ENCODE measurements at regions of chr10 and their contacts with region 1.

Region 1: DNA sequence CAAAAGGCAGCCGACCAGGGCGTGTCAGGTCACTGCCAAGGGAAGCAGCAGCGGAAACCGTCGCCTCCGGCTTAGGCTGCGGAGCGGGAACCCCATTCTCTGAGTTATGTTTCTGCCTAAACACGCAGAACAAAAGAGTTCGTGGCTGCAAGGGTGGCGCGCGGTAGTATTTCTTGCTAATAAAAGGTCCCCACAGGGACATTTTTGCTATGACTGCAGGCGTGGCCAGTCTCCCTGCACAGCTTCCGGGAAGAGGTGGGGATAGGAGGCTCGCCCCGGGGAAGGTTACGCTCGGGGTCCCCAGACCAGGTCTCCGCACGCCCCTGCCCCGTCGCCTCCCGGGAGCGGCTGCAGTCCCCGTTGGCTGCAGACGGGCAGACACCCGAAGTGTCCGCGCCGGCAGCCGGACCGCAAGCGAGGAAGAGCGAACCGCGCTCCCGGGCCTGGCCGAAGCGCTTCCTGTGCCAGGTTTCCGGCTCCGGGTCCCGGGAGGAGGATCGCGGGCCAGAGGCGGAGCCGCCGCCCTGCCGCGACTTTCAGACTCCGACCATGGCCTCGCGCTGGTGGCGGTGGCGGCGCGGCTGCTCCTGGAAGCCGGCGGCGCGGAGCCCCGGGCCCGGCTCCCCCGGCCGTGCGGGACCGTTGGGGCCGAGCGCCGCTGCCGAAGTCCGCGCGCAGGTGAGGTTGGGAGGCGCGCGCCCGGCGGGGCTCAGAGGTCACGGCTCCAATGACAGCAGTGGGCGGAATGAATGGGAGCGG is at the start of gene PDSS1:
- DNase-seq: peak; percentile 69
- H3K4me3 Mint-ChIP-seq: peak within 1 kb of the TSS; percentile 98
- H3K27ac Mint-ChIP-seq: peak within 1 kb of the TSS; percentile 95
- H3K4me1 Mint-ChIP-seq: peaks cover 13% of the 10 kb centered on the region
- H3K27me3 Mint-ChIP-seq: no peaks in the 10 kb centered on the region
- CTCF ChIP-seq: no peak
- total RNA-seq, gene PDSS1: 9.1 and 14.3 TPM in 2 replicates

Region 2: DNA sequence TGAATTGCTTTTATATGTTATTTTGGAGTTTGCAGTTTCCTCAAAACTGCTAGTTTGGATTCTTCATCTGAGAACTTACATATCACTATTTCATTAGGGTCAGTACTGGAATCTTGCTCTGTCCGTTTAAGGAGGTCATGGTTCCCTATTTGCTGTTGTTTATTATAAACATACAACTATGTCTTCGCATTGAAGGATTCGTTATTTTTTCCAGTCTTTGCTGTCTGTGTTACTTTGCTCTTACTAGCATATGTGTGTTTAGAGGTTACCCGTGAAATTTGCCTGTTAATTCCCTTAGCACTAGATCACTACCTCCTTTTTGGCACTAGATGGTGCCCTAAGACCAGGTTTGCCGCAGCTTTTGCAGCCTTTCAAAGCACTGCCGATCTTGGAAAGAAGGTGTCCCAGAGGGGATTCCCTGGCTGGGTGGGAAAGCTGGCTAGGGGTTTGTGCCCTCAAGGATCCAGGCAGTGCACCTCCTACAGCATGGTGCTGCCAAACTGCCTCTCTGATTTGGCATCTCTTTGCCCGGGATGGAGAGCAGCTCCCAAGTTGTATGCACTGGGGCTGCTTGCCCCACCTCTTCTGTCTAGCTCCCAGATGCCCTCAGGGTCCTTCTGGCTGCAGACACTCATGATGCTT is 362.3 kb before region 1 on chr10:
- CTCF ChIA-PET with region 1: no interaction called
- POLR2A ChIA-PET with region 1: no interaction called
- intact Hi-C with region 1: loop called (anchors 10 kb)
- DNase-seq: peak; percentile 66
- H3K4me3 Mint-ChIP-seq: no peak overlapping the region
- H3K27ac Mint-ChIP-seq: no peak overlapping the region
- H3K4me1 Mint-ChIP-seq: no peaks in the 10 kb centered on the region
- H3K27me3 Mint-ChIP-seq: peaks cover 36% of the 10 kb centered on the region
- CTCF ChIP-seq: peak; percentile 87

Region 3: DNA sequence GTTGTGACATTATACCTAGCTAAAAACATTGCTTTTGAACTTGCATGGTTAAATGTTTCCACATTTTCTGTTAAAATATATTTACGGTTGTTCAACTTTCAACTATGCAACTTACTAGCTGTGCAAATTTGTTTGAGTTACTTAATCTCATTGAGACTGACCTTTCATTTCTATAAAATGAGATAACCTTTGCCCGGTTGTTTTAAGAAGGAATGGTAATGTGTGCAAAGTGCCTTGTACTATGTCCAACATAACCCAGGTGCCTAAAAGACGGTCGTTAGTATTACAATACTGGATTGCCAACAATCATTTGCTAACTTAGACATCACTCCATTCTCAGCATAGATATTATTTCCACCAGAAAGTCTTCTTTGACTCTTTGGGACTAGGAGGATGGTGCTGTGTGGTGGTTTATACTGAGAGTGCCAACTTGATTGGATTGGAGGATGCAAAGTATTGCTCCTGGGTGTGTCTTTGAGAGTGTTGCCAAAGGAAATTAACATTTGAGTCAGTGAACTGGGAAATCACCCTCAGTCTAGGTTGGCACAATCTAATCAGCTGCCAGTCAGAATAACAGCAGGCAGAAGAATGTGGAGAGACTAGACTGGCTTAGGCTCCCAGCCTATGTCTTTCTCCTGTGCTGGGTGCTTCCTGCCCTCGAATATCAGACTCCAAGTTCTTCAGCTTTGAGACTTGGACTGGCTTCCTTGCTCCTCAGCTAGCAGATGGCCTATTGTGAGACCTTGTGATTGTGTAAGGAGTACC is 85.0 kb before region 1 on chr10:
- CTCF ChIA-PET with region 1: interaction called, 3 read pairs
- POLR2A ChIA-PET with region 1: interaction called, 6 read pairs
- intact Hi-C with region 1: loop called (anchors 5 kb)
- DNase-seq: peak; percentile 41
- H3K4me3 Mint-ChIP-seq: no peak overlapping the region
- H3K27ac Mint-ChIP-seq: no peak overlapping the region
- H3K4me1 Mint-ChIP-seq: no peaks in the 10 kb centered on the region
- H3K27me3 Mint-ChIP-seq: peaks cover 24% of the 10 kb centered on the region
- CTCF ChIP-seq: no peak

Region 4: DNA sequence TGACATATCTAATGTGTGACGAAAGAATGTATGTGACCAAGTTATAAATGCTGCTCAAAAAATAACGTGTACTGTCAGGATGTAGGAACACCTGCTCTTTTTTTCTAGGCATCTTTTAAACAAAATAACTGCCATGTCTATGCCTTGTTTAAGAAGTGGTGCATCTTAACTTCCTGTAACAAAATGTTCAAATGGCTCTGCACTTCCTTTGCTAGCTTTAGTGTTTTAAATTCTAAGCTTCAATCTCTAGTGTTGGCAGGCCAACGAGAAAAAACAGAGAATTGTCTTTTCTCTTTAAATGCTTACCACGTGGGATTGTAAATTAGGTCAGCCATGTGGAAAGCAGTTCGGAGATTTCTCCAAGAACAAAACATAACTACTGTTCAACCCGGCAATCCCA is 14.4 kb before region 1 on chr10:
- CTCF ChIA-PET with region 1: interaction called, 12 read pairs
- POLR2A ChIA-PET with region 1: interaction called, 12 read pairs
- intact Hi-C with region 1: no loop called
- DNase-seq: no peak
- H3K4me3 Mint-ChIP-seq: no peak overlapping the region
- H3K27ac Mint-ChIP-seq: no peak overlapping the region
- H3K4me1 Mint-ChIP-seq: peaks cover 11% of the 10 kb centered on the region
- H3K27me3 Mint-ChIP-seq: no peaks in the 10 kb centered on the region
- CTCF ChIP-seq: no peak

Measured in MCF 10A (cell line).